ENCODE measurements at regions of chr1 and their contacts with region 1.

Region 1: DNA sequence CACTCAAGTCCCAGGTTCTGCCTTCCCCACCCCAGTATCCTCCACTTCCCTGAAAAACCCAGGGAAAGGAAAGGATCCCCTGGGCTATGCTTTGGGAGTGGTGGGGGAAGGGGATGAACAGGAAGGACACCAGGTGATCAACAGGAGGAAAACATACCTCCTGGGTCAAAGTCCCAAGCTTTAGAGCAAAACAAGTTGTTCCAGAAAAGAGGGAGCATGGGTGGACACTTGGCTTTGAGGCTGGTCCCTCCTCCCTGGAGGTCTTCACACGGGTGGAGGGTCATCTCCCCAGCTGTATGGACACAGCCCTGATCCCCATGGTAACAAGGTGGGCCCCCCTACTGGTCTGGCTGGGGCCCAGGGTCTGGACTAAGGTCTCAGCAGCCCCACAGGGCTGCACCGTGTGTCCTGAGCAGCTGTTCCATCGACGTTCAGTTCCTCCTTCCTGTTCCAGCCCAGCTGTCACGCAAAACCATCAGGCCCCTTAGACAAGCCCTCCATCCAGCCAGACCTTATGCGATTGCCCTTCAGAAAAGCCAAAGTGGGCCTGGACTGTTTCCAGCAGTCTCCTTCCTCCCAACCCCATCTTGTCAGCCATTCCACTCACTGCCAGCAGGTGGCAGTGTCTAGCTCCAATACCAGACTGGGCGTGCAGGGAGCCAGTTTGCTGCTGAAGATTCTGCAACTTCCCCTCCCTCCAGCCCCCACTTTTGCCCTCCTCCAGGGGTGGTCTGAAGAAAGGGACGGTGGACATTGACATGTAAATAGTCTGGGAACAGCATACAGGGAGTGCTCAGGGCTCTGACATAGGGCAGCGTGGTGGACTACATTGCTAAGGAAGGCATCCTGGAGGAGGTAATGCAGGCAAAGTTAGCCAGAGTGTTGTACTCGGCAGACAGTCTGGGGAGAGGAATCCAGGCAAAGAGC is 2.9 kb upstream of the PDZK1IP1 start:
- DNase-seq: peak; percentile 71 to 85 (median 73)
- ATAC-seq: peak in 3 of 4 donors; percentile 51 to 67 (median 57)
- H3K4me3 ChIP-seq: no peak overlapping the region
- H3K27ac ChIP-seq: no peak overlapping the region
- H3K4me1 ChIP-seq: peaks cover 0 to 25% (median 14%) of the 10 kb centered on the region in 12 donors
- H3K27me3 ChIP-seq: peaks cover 0 to 6% (median 0%) of the 10 kb centered on the region in 9 donors
- CTCF ChIP-seq: peak; percentile 89 to 98 (median 94)
- POLR2A ChIP-seq: no peak

Region 2: GRCh38 chr1:47231301-47232186 is 38.8 kb after region 1 on chr1:
- intact Hi-C with region 1: loop called in 1 of 10 experiments (anchors 5 kb)
- DNase-seq: peak in 4 of 5 donors; percentile 46 to 60 (median 58)
- ATAC-seq: peak in 3 of 4 donors; percentile 30 to 65 (median 32)
- H3K4me3 ChIP-seq: peak overlapping the region; percentile 46 to 70 (median 58)
- H3K27ac ChIP-seq: peak overlapping the region; percentile 57 to 96 (median 87)
- H3K4me1 ChIP-seq: peaks cover 0 to 47% (median 24%) of the 10 kb centered on the region in 12 donors
- H3K27me3 ChIP-seq: peaks cover 48 to 88% (median 72%) of the 10 kb centered on the region in 9 donors
- CTCF ChIP-seq: no peak
- POLR2A ChIP-seq: peak in 1 of 2 donors; percentile 34

Region 3: DNA sequence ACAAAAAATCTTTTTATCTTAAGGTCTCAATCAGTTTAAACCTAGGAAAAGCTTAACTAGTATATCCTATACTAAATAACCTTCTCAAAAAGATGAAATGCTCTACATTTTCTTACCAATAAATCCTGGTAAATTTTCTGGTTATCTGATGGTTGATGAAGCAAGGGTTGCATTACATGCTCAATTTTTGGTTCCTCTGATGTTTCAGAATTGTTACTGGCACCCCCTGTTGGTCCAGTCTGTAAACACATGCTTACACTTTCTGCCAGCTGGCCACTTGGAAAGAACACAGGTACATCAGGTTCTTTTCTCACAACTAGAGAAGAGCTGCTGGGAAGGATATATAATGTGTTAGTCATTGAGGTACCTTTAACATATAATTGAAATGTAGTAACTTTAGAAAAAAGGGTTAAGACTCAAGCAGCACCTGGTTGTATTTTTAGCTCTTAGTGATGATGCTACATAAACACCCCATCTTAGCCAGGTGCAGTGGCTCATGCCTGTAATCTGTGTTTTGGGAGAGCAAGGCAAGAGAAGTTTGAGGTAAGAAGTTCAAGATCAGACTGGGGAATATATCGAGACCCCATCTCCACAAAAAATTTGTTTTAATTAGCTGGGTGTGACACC is 70.2 kb after region 1 on chr1:
- intact Hi-C with region 1: loop called (anchors 1 to 5 kb)
- DNase-seq: peak in 3 of 5 donors; percentile 22 to 31 (median 24)
- ATAC-seq: peak in 1 of 4 donors; percentile 39
- H3K4me3 ChIP-seq: no peak overlapping the region
- H3K27ac ChIP-seq: no peak overlapping the region
- H3K4me1 ChIP-seq: no peaks in the 10 kb centered on the region
- H3K27me3 ChIP-seq: no peaks in the 10 kb centered on the region
- CTCF ChIP-seq: peak; percentile 38 to 72 (median 62)
- POLR2A ChIP-seq: no peak

Region 4: DNA sequence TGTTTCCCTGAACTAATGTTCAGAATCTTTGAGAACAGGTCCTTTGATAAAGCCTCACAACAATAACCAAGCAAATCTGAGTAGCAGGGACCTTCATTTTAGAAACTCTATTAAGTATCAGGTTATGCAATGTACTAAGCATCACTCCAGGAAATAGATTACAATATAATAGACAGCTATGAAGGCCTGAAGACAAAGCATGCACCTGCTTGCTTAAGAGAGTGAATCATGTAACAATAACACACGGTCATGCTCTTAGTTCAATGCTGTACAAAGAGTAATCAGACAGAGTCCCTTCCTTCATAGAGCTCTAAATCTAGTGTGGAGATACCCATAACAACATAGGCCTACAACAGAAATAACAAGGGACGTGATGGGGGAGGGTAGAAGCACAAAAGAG is 132.8 kb after region 1 on chr1:
- intact Hi-C with region 1: loop called in 1 of 10 experiments (anchors 10 kb)
- DNase-seq: no peak
- ATAC-seq: no peak
- H3K4me3 ChIP-seq: no peak overlapping the region
- H3K27ac ChIP-seq: no peak overlapping the region
- H3K4me1 ChIP-seq: no peaks in the 10 kb centered on the region
- H3K27me3 ChIP-seq: no peaks in the 10 kb centered on the region
- CTCF ChIP-seq: no peak
- POLR2A ChIP-seq: no peak

Region 5: GRCh38 chr1:47424336-47424982 is 231.7 kb after region 1 on chr1:
- intact Hi-C with region 1: loop called in 3 of 10 experiments (anchors 5 to 10 kb)
- DNase-seq: no peak
- ATAC-seq: no peak
- H3K4me3 ChIP-seq: no peak overlapping the region
- H3K27ac ChIP-seq: no peak overlapping the region
- H3K4me1 ChIP-seq: peaks cover 0 to 7% (median 0%) of the 10 kb centered on the region in 12 donors
- H3K27me3 ChIP-seq: peaks cover 0 to 43% (median 21%) of the 10 kb centered on the region in 9 donors
- CTCF ChIP-seq: peak; percentile 45 to 78 (median 59)
- POLR2A ChIP-seq: no peak

Region 6: DNA sequence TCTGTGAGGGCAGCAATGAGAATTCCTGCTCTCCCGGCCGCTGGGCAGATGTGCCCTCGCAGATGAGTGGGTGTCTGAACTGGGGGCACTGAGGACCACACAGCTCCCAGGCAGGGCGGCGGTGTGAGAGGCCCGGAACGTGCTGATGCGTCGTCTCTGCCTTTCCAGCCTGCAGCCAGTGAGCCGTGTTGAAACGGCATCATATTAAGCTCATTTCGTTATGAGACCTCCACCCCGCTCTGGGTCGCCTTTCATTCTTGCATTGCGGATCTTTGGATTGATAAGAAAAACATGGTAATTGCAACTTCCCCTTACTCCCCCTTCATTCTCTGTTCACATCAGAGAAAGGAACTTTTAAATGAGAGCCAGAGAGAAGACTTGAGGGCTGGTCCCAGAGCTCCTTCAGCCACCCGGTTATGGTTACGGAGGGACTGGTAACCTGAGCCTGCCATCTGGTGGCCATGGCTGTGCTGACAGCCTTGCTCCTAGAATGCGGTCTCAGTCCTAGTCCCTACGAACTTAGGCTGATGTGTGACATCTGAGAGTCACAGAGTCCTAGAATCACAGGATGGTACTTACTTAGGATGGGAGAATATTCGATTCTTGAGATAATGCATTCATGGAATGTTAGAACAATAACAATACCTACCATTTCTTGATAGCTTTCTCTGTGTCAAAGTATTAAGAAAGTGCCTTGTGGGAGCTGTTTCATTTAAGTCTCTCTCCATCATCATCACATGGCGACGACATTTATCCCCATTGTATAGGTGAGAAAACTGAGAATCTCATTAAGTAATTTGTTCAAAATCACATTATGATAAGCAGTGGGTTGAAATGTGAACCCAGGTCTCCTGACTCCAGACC is 533.5 kb after region 1 on chr1:
- intact Hi-C with region 1: loop called in 2 of 10 experiments (anchors 5 to 10 kb)
- DNase-seq: peak; percentile 68 to 79 (median 72)
- ATAC-seq: peak; percentile 82 to 93 (median 88)
- H3K4me3 ChIP-seq: peak overlapping the region in 8 of 12 donors; percentile 8 to 35 (median 30)
- H3K27ac ChIP-seq: no peak overlapping the region
- H3K4me1 ChIP-seq: peaks cover 0 to 17% (median 13%) of the 10 kb centered on the region in 12 donors
- H3K27me3 ChIP-seq: peaks cover 15 to 48% (median 28%) of the 10 kb centered on the region in 9 donors
- CTCF ChIP-seq: peak; percentile 80 to 96 (median 84)
- POLR2A ChIP-seq: no peak

Measured in heart left ventricle (tissue), 16 donors.